Activated CD8-positive, alpha-beta T cell treated with anti-CD3 and anti-CD28 coated beads for 36 hours (primary cell): ENCODE measurements at regions of chr2 and their contacts with region 1.

Region 1: DNA sequence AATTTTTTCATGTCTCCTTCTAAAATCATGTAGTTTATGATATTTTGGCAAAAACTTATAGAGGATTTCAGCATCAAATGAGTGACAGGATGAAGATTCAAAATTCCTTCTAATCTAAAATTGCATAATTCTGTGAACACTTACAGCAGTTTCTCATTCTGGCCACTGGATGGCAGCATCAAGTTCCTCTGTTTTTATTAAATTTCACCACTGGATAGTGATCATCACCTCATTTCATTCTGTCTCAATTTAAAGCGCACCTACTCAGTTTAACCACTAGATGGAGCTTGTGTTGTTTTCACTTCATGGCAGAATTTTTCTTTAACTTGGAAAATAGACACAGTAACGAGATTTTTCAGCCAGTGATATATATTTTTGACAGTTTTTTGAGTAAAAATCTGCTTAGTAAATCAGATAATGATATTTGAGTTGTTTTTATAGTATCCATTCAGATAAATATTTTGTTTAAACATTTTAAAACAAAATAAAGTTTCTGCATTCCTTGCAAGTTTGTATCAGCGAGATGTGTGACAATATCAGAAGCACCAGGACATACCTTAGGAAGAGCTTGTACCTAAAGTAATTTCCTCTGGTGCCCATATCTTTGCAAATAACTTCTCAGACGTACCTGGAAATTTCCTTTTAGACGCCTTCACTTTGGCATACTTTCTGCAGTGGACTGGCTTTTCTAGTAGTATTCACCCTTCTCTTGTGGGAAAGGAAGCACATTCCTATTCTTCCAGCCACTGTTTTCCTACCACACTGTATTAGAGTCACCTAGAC is 94.7 kb upstream of the ARHGAP15 start:
- DNase-seq: peak; percentile 73
- ATAC-seq: peak; percentile 95
- H3K4me3 Mint-ChIP-seq: no peak overlapping the region
- H3K27ac Mint-ChIP-seq: no peak overlapping the region
- H3K4me1 Mint-ChIP-seq: peaks cover 5% of the 10 kb centered on the region
- H3K27me3 Mint-ChIP-seq: peaks cover 3% of the 10 kb centered on the region
- CTCF ChIP-seq: peak; percentile 99

Region 2: GRCh38 chr2:143051465-143051864 is 17.0 kb after region 1 on chr2:
- CTCF ChIA-PET with region 1: interaction called, 17 read pairs
- POLR2A ChIA-PET with region 1: no interaction called
- intact Hi-C with region 1: no loop called
- DNase-seq: no peak
- ATAC-seq: no peak
- H3K4me3 Mint-ChIP-seq: no peak overlapping the region
- H3K27ac Mint-ChIP-seq: no peak overlapping the region
- H3K4me1 Mint-ChIP-seq: peaks cover 2% of the 10 kb centered on the region
- H3K27me3 Mint-ChIP-seq: peaks cover 4% of the 10 kb centered on the region
- CTCF ChIP-seq: no peak

Region 3: GRCh38 chr2:143058851-143059250 is 24.4 kb after region 1 on chr2:
- CTCF ChIA-PET with region 1: interaction called, 12 read pairs
- POLR2A ChIA-PET with region 1: no interaction called
- intact Hi-C with region 1: no loop called
- DNase-seq: no peak
- ATAC-seq: no peak
- H3K4me3 Mint-ChIP-seq: no peak overlapping the region
- H3K27ac Mint-ChIP-seq: no peak overlapping the region
- H3K4me1 Mint-ChIP-seq: no peaks in the 10 kb centered on the region
- H3K27me3 Mint-ChIP-seq: peaks cover 5% of the 10 kb centered on the region
- CTCF ChIP-seq: no peak

Region 4: GRCh38 chr2:143083636-143084035 is 49.2 kb after region 1 on chr2:
- CTCF ChIA-PET with region 1: interaction called, 14 read pairs
- POLR2A ChIA-PET with region 1: no interaction called
- intact Hi-C with region 1: no loop called
- DNase-seq: peak; percentile 5
- ATAC-seq: peak; percentile 80
- H3K4me3 Mint-ChIP-seq: no peak overlapping the region
- H3K27ac Mint-ChIP-seq: peak overlapping the region; percentile 43
- H3K4me1 Mint-ChIP-seq: peaks cover 24% of the 10 kb centered on the region
- H3K27me3 Mint-ChIP-seq: no peaks in the 10 kb centered on the region
- CTCF ChIP-seq: no peak

Region 5: GRCh38 chr2:143217512-143218115 is 183.1 kb after region 1 on chr2:
- CTCF ChIA-PET with region 1: interaction called, 10 read pairs
- POLR2A ChIA-PET with region 1: no interaction called
- intact Hi-C with region 1: loop called (anchors 10 kb)
- DNase-seq: no peak
- ATAC-seq: no peak
- H3K4me3 Mint-ChIP-seq: no peak overlapping the region
- H3K27ac Mint-ChIP-seq: peak overlapping the region; percentile 60
- H3K4me1 Mint-ChIP-seq: peaks cover 39% of the 10 kb centered on the region
- H3K27me3 Mint-ChIP-seq: no peaks in the 10 kb centered on the region
- CTCF ChIP-seq: no peak

Region 6: GRCh38 chr2:143230506-143231253 is 196.2 kb after region 1 on chr2:
- CTCF ChIA-PET with region 1: interaction called, 3 read pairs
- POLR2A ChIA-PET with region 1: no interaction called
- intact Hi-C with region 1: loop called (anchors 10 kb)
- DNase-seq: no peak
- ATAC-seq: no peak
- H3K4me3 Mint-ChIP-seq: no peak overlapping the region
- H3K27ac Mint-ChIP-seq: peak overlapping the region; percentile 25
- H3K4me1 Mint-ChIP-seq: peaks cover 37% of the 10 kb centered on the region
- H3K27me3 Mint-ChIP-seq: no peaks in the 10 kb centered on the region
- CTCF ChIP-seq: no peak

Region 7: DNA sequence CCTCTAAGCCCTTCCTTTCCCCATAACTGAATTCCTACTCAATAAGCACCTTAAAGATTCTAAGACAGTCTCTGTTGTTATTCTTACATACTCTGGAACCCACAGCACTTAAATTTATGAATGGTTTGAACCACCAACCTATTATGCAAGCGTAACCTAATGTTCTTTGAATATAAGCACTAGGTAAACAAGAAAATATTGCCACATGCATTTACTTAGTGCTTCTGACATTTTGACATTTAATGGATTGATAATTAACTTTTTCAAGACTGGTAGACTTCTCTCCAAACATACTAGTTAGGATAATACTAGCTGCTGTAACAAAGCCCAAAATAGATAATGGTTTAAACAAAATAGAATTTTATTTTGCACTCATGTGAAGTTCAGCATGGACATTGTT is 259.6 kb after region 1 on chr2:
- CTCF ChIA-PET with region 1: no interaction called
- POLR2A ChIA-PET with region 1: no interaction called
- intact Hi-C with region 1: no loop called
- DNase-seq: no peak
- ATAC-seq: no peak
- H3K4me3 Mint-ChIP-seq: no peak overlapping the region
- H3K27ac Mint-ChIP-seq: peak overlapping the region; percentile 23
- H3K4me1 Mint-ChIP-seq: peaks cover 34% of the 10 kb centered on the region
- H3K27me3 Mint-ChIP-seq: no peaks in the 10 kb centered on the region
- CTCF ChIP-seq: no peak